PC-3 (cell line): ENCODE measurements at regions of chr9 and their contacts with region 1.

Region 1: DNA sequence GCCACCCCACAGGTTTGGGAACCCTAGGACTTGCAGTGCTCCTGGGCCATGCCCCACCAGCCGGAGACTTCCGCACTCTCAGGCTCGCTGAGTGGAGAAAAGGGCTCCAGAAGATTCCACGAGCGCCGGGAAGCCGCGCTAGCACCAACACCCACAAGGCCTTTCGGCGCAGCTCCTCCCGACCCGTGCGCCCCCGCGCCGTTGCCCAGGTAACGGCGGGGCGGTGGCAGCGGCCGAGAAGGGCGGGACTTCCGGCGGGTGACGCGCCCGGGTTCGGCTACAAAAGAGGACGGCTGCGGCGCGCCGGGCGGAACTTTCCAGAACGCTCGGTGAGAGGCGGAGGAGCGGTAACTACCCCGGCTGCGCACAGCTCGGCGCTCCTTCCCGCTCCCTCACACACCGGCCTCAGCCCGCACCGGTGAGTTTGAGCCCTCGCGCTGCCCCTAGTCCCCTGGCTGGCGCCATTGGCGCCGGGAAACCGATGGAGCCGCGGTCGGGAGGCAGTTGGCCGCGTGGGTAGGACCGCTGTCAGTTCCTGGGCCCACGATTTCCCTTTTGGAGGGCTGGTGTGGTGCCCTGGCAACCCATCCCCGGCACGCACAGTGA is at the start of gene DNAJA1:
- DNase-seq: peak; percentile 92
- ATAC-seq: peak; percentile 89
- H3K4me3 ChIP-seq: peak within 1 kb of the TSS; percentile 94
- H3K27ac ChIP-seq: peak within 1 kb of the TSS; percentile 62
- H3K4me1 ChIP-seq: peaks cover 55% of the 10 kb centered on the region
- H3K27me3 ChIP-seq: no peaks in the 10 kb centered on the region
- CTCF ChIP-seq: no peak
- total RNA-seq, gene DNAJA1: 109 and 114 TPM in 2 replicates

Region 2: GRCh38 chr9:33044127-33044673 is 19.1 kb after region 1 on chr9:
- CTCF ChIA-PET with region 1: no interaction called
- POLR2A ChIA-PET with region 1: no interaction called
- intact Hi-C with region 1: loop called (anchors 1 kb)
- DNase-seq: peak; percentile 75
- ATAC-seq: peak; percentile 88
- H3K4me3 ChIP-seq: peak overlapping the region; percentile 68
- H3K27ac ChIP-seq: peak overlapping the region; percentile 61
- H3K4me1 ChIP-seq: peaks cover 15% of the 10 kb centered on the region; the same call in 1 of the 2 replicates
- H3K27me3 ChIP-seq: no peaks in the 10 kb centered on the region
- CTCF ChIP-seq: no peak